ENCODE measurements at regions of chr10 and their contacts with region 1.

Region 1: GRCh38 chr10:22244001-22244400 is 26.2 kb upstream of the EBLN1 start:
- DNase-seq: no peak
- ATAC-seq: no peak
- H3K4me3 ChIP-seq: no peak overlapping the region
- H3K27ac ChIP-seq: no peak overlapping the region
- H3K4me1 ChIP-seq: no peaks in the 10 kb centered on the region
- H3K27me3 ChIP-seq: peaks cover 0 to 12% (median 0%) of the 10 kb centered on the region in 4 donors
- CTCF ChIP-seq: no peak

Region 2: DNA sequence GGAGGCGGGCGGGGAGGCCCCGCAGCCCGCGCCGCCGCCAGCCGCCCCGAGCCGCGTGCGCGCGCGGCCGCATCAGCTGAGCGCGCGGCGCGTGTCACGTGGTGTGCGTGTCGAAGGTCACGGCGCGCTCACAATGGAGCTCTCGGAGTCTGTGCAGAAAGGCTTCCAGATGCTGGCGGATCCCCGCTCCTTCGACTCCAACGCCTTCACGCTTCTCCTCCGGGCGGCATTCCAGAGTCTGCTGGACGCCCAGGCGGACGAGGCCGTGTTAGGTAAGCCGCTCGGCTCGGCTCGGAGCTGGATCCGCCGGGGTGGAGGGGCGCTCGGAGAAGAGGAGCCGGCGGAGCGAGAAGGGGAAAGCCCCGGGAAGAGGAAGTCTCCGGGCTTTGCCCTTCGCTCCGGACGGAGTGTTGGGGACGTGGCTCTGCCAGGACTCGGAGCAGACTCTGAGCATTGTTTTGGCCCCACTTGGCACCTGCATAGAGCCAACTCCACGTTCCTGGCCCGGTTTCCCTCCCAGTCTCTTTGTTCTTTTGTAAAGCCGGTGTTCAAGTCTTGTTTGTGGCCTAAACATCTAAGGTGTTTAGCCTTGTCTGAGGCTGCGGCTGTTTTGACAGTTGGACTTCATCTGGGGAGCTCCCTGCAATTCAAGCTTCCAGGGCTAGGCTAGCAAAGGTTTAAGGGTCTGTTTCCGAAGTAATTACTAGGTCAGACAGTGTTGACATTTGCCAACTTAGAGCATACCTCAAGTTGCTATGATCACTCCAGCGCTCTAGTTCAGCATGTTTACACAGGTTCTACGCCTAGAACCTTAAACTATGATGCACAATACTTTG is 72.5 kb after region 1 on chr10 and contains the start of gene COMMD3:
- intact Hi-C with region 1: loop called in 1 of 3 experiments (anchors 10 kb)
- DNase-seq: peak; percentile 81 to 93 (median 85)
- ATAC-seq: peak; percentile 84 to 92 (median 86)
- H3K4me3 ChIP-seq: peak within 1 kb of the TSS; percentile 59 to 87 (median 84)
- H3K27ac ChIP-seq: peak within 1 kb of the TSS; percentile 83 to 97 (median 91)
- H3K4me1 ChIP-seq: peaks cover 10 to 14% (median 11%) of the 10 kb centered on the region in 3 donors
- H3K27me3 ChIP-seq: peaks cover 0 to 5% (median 0%) of the 10 kb centered on the region in 4 donors
- CTCF ChIP-seq: no peak
- total RNA-seq, gene COMMD3: 27.9 to 43.0 (median 34.6) TPM